ENCODE measurements at regions of chr2 and their contacts with region 1.

Region 1: GRCh38 chr2:11743846-11744553 is 2.4 kb upstream of the LPIN1 start:
- DNase-seq: peak; percentile 82
- H3K4me3 Mint-ChIP-seq: peak overlapping the region; percentile 47
- H3K27ac Mint-ChIP-seq: peak overlapping the region; percentile 85
- H3K4me1 Mint-ChIP-seq: peaks cover 54% of the 10 kb centered on the region
- H3K27me3 Mint-ChIP-seq: no peaks in the 10 kb centered on the region

Region 2: GRCh38 chr2:11688222-11689069 is 55.6 kb before region 1 on chr2:
- CTCF ChIA-PET with region 1: interaction called, 12 read pairs
- POLR2A ChIA-PET with region 1: no interaction called
- DNase-seq: peak; percentile 87
- H3K4me3 Mint-ChIP-seq: peak overlapping the region; percentile 38
- H3K27ac Mint-ChIP-seq: no peak overlapping the region
- H3K4me1 Mint-ChIP-seq: peaks cover 20% of the 10 kb centered on the region
- H3K27me3 Mint-ChIP-seq: peaks cover 14% of the 10 kb centered on the region

Region 3: GRCh38 chr2:11753886-11754699 is 10.1 kb after region 1 on chr2:
- CTCF ChIA-PET with region 1: interaction called, 13 read pairs
- POLR2A ChIA-PET with region 1: interaction called, 32 read pairs
- DNase-seq: peak; percentile 72
- H3K4me3 Mint-ChIP-seq: peak overlapping the region; percentile 63
- H3K27ac Mint-ChIP-seq: peak overlapping the region; percentile 94
- H3K4me1 Mint-ChIP-seq: peaks cover 92% of the 10 kb centered on the region
- H3K27me3 Mint-ChIP-seq: no peaks in the 10 kb centered on the region

Region 4: GRCh38 chr2:11778923-11779757 is 35.1 kb after region 1 on chr2:
- CTCF ChIA-PET with region 1: interaction called, 75 read pairs
- POLR2A ChIA-PET with region 1: interaction called, 39 read pairs
- DNase-seq: peak; percentile 85
- H3K4me3 Mint-ChIP-seq: peak overlapping the region; percentile 34
- H3K27ac Mint-ChIP-seq: peak overlapping the region; percentile 67
- H3K4me1 Mint-ChIP-seq: peaks cover 44% of the 10 kb centered on the region
- H3K27me3 Mint-ChIP-seq: no peaks in the 10 kb centered on the region

Region 5: DNA sequence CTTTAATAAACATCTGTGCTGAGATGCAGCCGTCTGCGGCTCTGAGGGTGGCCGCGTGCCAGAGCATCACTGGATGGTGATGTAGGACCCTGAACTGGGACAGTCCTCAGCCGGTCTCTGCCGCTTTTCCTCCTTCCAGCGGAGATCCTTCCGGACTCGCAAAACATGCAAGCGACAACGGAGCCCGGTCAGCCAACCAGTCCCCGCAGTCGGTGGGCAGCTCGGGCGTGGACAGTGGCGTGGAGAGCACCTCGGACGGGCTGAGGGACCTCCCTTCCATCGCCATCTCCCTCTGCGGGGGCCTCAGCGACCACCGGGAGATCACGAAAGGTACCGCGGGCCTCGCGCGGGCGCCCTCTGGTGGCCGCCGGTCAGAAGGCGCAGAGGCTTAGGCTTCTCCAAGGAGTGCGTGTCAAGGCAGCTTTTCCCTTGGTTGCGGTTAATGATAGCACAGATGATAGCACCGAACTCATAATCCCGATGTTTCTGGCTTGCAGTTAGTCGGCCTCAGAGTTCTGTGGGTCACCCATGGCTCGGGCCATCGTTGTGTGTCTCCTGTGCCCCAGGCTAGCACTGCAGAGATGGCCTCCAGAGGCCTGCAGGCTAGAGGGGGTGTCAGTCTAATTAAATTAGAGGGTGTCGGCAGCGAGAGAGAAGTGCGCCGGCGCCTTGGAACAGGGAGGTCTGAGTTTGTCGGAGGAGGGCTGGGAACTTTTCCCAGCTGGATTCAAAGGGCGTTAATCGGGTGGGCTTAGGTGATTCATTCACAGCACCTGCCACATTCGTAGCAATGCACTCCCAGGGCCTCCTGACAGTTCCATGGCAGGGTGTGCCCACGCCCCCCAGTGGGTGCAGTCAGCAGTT is 41.0 kb after region 1 on chr2:
- CTCF ChIA-PET with region 1: interaction called, 75 read pairs
- POLR2A ChIA-PET with region 1: interaction called, 17 read pairs
- DNase-seq: peak; percentile 42
- H3K4me3 Mint-ChIP-seq: no peak overlapping the region
- H3K27ac Mint-ChIP-seq: no peak overlapping the region
- H3K4me1 Mint-ChIP-seq: peaks cover 6% of the 10 kb centered on the region
- H3K27me3 Mint-ChIP-seq: no peaks in the 10 kb centered on the region

Region 6: DNA sequence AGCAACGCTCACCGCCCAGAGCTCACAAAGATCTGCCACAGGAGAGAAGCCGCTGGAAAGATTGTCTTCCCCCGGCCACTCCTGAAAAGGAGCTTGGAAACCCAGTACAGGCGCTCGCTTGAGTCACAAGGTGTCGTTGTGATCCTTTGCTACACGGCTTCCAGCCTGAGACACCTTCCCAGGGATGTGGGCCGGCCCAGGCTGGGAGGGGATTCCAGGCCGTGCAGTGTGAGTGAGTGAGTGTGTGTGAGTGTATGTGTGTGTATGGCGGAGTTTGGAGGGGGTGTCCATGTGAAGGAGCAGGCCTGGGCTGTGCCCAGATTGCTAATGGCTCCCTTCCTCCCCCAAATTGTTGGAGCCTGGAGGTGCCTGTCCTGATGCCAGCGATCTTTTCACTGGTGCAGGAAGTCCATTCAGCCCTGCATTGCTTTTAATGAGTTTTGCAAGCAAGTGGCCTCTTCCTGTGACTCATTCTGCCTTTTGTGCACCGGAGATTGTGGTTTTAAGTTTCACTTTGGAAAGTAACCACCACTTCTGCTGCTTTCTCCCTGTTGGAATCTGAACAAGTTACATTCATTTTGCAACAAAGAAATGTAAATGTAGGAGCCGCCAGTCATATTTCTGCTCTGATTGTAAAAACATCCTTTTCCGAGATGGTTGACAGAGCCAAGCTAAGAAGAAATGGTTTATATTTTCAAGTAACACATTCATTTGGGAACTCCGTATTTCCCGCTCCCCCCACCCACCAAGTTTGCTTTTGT is 86.1 kb after region 1 on chr2:
- CTCF ChIA-PET with region 1: no interaction called
- POLR2A ChIA-PET with region 1: no interaction called
- DNase-seq: peak; percentile 64
- H3K4me3 Mint-ChIP-seq: peak overlapping the region; percentile 52
- H3K27ac Mint-ChIP-seq: peak overlapping the region; percentile 13
- H3K4me1 Mint-ChIP-seq: peaks cover 29% of the 10 kb centered on the region
- H3K27me3 Mint-ChIP-seq: peaks cover 51% of the 10 kb centered on the region

Measured in activated CD4-positive, alpha-beta memory T cell treated with anti-CD3 and anti-CD28 coated beads, Interleukin-2, amount 10 ng/mL, durations not matched to agents 7 days and 5 days (primary cell).